ENCODE measurements at regions of chr13 and their contacts with region 1.

Region 1: GRCh38 chr13:51781246-51782022 is 22.5 kb downstream of the DHRS12 start:
- DNase-seq: peak; percentile 18
- ATAC-seq: peak; percentile 96
- H3K4me3 ChIP-seq: no peak overlapping the region
- H3K27ac ChIP-seq: no peak overlapping the region
- H3K4me1 ChIP-seq: no peaks in the 10 kb centered on the region
- H3K27me3 ChIP-seq: no peaks in the 10 kb centered on the region
- CTCF ChIP-seq: peak; percentile 47 to 61 (median 57); a peak in 5 of 6 replicates
- POLR2A ChIP-seq: no peak
- RAD21 ChIP-seq: peak; percentile 77

Region 2: GRCh38 chr13:51435002-51435578 is 346.3 kb before region 1 on chr13:
- CTCF ChIA-PET with region 1: interaction called, 6 read pairs
- POLR2A ChIA-PET with region 1: no interaction called
- RAD21 ChIA-PET with region 1: no interaction called
- intact Hi-C with region 1: loop called (anchors 1 kb)
- DNase-seq: no peak
- ATAC-seq: no peak
- H3K4me3 ChIP-seq: no peak overlapping the region
- H3K27ac ChIP-seq: no peak overlapping the region
- H3K4me1 ChIP-seq: no peaks in the 10 kb centered on the region
- H3K27me3 ChIP-seq: no peaks in the 10 kb centered on the region
- CTCF ChIP-seq: peak; percentile 45 to 54 (median 48); a peak in 5 of 6 replicates
- POLR2A ChIP-seq: no peak
- RAD21 ChIP-seq: peak; percentile 60

Region 3: DNA sequence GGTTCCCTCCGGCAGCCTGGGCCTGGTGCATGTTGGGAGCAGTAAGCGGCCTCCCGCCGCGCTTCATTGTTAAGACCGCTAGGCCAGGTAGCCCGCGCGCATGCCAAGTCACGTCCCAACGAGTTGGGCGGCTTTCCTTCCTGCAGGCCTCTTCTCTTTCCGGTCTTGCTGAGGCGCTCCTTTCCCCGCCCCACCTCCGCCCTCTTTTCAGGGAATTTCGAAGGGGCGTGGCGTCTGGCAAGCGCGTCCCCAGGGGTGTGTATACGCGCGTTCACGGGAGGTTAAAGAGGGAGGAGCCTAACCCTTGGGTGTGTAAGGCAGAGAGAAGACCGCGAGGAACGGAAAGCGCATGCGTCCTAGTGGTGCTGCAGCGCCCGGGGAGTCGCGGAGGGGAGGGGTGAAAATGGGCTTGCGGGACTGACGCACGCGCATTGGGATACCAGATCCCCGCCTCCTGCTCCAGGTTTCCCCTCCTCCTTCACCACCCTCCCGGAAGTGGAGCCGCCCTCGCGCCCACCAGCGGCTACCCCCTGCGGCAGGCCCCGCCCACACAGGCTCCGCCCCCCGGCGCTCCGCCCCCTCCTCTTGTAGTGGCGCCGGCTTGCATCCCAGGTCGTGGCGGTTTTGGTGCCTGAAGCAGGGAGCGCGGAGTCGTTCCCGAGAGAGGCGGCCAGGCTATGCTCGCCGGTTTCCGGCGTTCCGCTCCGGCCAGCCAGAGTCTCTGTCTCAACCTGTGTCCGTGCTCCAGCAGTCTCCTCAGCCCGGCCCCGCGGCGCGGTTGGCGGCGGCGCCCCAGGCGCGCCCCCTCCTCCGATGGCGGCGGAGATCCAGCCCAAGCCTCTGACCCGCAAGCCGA is 197.3 kb before region 1 on chr13 and contains the start of gene WDFY2:
- CTCF ChIA-PET with region 1: interaction called, 3 read pairs
- POLR2A ChIA-PET with region 1: no interaction called
- RAD21 ChIA-PET with region 1: no interaction called
- intact Hi-C with region 1: loop called (anchors 2 kb)
- DNase-seq: peak; percentile 99
- ATAC-seq: peak; percentile 84
- H3K4me3 ChIP-seq: peak within 1 kb of the TSS; percentile 75 to 89
- H3K27ac ChIP-seq: peak within 1 kb of the TSS; percentile 83
- H3K4me1 ChIP-seq: peaks cover 14 to 18% of the 10 kb centered on the region in 2 experiments
- H3K27me3 ChIP-seq: no peaks in the 10 kb centered on the region
- CTCF ChIP-seq: no peak
- POLR2A ChIP-seq: peak; percentile 71
- RAD21 ChIP-seq: no peak
- total RNA-seq, gene WDFY2: 6.1 TPM